Head of caudate nucleus (tissue), 42 donors: ENCODE measurements at regions of chr19 and their contacts with region 1.

Region 1: GRCh38 chr19:32971715-32972540 is at the starts of genes CEP89 and FAAP24:
- DNase-seq: peak; percentile 95 to 100 (median 99)

Region 2: DNA sequence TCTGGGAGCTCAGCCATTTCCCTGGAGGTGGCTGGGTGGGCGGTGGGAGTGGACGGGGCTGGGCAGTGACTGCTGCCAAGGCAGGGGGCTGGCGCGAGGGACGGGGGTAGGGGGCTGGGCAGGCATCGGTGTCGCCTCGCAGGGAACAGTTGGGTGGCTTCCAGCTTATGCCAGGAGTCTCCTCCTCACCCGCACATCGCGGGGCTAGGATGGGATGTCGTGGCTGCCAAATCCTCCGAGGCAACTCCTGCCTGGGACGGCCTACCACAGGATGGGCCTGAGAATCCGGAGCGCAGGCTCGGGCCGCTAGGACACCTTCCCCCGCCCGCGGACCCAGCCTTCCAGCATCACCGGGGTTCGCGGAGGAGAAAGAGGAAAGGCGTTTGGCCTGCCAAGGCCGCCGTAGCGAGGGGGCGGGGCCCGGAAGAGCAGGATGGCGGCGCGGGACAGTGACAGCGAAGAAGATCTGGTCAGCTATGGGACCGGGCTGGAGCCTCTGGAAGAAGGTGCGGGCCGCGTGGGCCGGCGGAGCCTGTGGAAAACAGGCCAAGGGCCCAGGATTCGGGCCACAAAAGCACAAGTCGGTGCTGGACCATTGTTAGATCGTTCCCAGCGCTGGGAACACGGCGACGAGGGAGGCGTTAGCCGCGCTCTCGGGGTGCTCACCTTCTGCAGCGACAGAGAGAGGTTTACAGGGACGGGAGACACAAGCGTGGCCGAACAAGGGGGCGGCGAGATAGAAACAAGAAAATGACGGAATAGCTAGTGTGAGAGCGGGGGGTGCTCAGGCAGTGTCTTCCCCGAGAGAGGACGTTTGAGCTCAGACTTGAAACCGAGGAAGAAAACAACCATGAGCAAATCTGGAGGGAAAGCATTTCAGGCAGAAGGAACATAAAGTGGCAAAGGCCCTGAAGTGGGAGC is 109.1 kb after region 1 on chr19 and contains the start of gene GPATCH1:
- intact Hi-C with region 1: loop called (anchors 5 kb)
- DNase-seq: peak; percentile 89 to 98 (median 94)

Region 3: DNA sequence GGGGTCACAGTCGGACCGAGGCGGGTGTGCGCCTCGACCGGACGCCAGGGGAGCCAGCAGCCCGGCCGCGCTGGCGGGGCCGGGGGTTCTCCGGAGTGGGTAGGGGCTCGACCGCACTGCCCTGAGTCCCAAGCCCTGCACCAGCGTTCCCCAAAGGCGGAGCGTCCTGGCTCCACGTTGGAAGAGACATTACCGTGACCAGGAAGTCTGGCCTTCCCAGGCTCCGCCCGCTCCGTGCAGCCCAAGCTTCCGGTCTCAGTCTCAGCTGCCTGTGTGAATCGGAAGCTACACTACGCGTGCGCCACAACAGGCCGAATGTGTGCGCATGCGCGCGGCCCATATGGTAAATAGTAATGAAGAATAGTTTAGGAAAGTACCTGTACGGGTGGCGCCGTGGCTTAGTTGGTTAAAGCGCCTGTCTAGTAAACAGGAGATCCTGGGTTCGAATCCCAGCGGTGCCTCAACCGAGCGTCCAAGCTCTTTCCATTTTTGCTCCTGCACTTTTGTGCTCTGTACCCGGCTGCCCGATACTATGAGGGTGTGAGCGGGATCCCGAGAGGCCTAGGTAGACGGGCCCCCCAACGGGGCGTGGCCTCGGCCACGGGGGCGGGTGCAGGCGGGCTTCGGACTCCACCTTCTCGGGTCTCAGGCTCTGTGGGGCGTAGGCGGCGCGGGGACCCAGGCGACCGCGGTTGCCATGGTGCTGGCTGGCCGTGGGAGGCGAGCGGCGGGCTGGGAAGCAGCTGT is 204.9 kb after region 1 on chr19:
- intact Hi-C with region 1: loop called (anchors 10 kb)
- DNase-seq: peak; percentile 87 to 97 (median 93)